ENCODE measurements at regions of chr5 and their contacts with region 1.

Region 1: GRCh38 chr5:112419986-112420864 is 1.1 kb upstream of the EPB41L4A start:
- DNase-seq: peak; percentile 67
- H3K4me3 Mint-ChIP-seq: peak overlapping the region; percentile 61
- H3K27ac Mint-ChIP-seq: no peak overlapping the region
- H3K4me1 Mint-ChIP-seq: peaks cover 10% of the 10 kb centered on the region
- H3K27me3 Mint-ChIP-seq: peaks cover 40% of the 10 kb centered on the region

Region 2: GRCh38 chr5:112109331-112110007 is 310.8 kb before region 1 on chr5:
- CTCF ChIA-PET with region 1: no interaction called
- POLR2A ChIA-PET with region 1: no interaction called
- intact Hi-C with region 1: no loop called
- DNase-seq: no peak
- H3K4me3 Mint-ChIP-seq: no peak overlapping the region
- H3K27ac Mint-ChIP-seq: no peak overlapping the region
- H3K4me1 Mint-ChIP-seq: no peaks in the 10 kb centered on the region
- H3K27me3 Mint-ChIP-seq: peaks cover 4% of the 10 kb centered on the region

Region 3: DNA sequence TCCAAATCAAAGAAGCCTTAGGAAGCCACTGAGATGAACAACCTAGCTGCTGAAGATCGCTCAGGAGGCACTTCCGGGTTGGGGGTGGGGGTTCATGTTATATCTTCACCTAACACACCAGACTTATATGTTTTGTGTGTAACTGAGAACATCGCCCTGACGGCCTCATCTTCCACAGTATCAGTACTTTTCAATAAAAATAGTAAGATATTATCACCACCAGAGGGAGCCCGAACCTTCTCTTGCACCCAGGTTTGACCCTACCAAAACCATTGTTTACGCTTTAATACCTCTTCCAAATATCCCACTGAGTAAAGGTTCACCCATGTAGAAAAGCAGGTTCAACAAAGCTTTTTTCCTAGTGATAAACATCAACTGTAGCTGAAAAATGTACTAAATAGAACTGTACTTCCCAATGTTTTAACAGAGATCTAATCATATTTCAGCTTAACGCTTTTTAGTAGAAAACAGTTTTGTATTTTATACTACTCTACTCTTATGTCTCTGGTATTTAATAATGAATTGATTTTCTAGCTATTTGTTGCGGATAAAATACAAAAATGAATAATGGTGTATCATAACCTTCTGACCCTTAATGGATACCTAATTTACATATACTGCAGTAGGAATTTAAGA is 245.1 kb before region 1 on chr5:
- CTCF ChIA-PET with region 1: interaction called, 38 read pairs
- POLR2A ChIA-PET with region 1: no interaction called
- intact Hi-C with region 1: loop called (anchors 1 kb)
- DNase-seq: peak; percentile 33
- H3K4me3 Mint-ChIP-seq: no peak overlapping the region
- H3K27ac Mint-ChIP-seq: no peak overlapping the region
- H3K4me1 Mint-ChIP-seq: peaks cover 2% of the 10 kb centered on the region
- H3K27me3 Mint-ChIP-seq: peaks cover 10% of the 10 kb centered on the region

Region 4: DNA sequence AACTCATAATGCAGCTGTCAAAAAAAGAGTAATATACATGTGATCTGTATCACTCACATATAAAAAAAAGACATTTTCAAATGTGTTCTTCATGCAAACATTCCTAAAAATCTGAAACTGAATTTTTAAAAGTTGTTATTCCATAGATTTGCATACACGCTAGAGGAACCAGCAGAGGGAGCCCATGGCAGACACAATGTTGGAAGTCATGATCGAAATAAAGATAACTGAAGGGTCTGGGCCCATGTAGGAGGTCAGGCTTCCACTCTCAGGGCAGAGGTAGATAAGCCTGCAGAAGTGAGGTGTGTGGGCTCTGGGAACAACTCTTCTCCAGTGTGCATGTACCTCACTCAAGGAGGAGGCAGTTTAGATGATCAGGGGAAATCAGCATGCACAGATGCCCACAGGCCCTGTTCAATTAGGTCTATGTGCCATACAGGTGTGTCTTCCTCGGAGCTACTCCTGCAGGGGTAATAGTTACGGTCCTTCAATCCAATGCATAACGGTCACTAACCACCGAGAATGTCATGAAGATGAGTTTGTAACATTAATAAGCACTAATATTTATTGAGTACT is 209.7 kb before region 1 on chr5:
- CTCF ChIA-PET with region 1: interaction called, 4 read pairs
- POLR2A ChIA-PET with region 1: no interaction called
- intact Hi-C with region 1: loop called (anchors 1 kb)
- DNase-seq: no peak
- H3K4me3 Mint-ChIP-seq: no peak overlapping the region
- H3K27ac Mint-ChIP-seq: no peak overlapping the region
- H3K4me1 Mint-ChIP-seq: no peaks in the 10 kb centered on the region
- H3K27me3 Mint-ChIP-seq: peaks cover 12% of the 10 kb centered on the region

Region 5: GRCh38 chr5:112757468-112758208 is 337.4 kb after region 1 on chr5:
- CTCF ChIA-PET with region 1: no interaction called
- POLR2A ChIA-PET with region 1: no interaction called
- intact Hi-C with region 1: loop called (anchors 2 kb)
- DNase-seq: no peak
- H3K4me3 Mint-ChIP-seq: no peak overlapping the region
- H3K27ac Mint-ChIP-seq: no peak overlapping the region
- H3K4me1 Mint-ChIP-seq: no peaks in the 10 kb centered on the region
- H3K27me3 Mint-ChIP-seq: no peaks in the 10 kb centered on the region

Measured in activated CD4-positive, alpha-beta memory T cell treated with anti-CD3 and anti-CD28 coated beads for 36 hours (primary cell).